ENCODE measurements at regions of chr14 and their contacts with region 1.

Region 1: DNA sequence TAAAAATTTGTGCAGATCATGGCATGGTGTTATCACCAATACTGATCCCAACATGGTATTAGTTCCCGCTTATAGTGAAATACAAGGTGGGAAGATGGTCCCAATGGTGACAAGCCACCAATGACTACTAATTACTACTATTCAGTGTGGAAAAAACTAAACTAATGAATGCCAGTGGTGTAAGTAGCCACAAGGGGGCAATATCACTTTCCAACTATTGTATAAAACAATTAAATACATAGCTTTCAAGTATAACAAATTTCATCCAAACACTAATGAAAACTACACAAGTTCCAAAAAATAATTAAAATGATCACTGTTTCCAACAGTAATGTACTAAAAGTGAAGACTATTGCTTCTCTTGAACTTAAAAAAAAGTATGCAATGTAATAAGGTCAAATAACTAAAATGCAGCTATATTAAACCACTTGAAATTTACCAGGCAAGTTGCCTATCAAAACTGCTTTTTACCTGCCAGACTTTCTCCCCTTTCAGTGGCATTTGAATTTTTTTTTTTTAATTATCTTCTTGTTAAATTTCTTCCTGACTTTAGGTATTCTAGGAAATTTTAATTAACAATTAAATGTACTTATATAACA is 58.0 kb downstream of the PAPLN start:
- DNase-seq: no peak
- H3K4me3 ChIP-seq: no peak overlapping the region
- H3K27ac ChIP-seq: no peak overlapping the region
- H3K27me3 ChIP-seq: no peaks in the 10 kb centered on the region
- CTCF ChIP-seq: peak; percentile 70

Region 2: GRCh38 chr14:72962829-72963312 is 332.4 kb before region 1 on chr14:
- CTCF ChIA-PET with region 1: no interaction called
- POLR2A ChIA-PET with region 1: no interaction called
- DNase-seq: peak; percentile 75
- H3K4me3 ChIP-seq: no peak overlapping the region
- H3K27ac ChIP-seq: no peak overlapping the region
- H3K27me3 ChIP-seq: no peaks in the 10 kb centered on the region
- CTCF ChIP-seq: no peak

Region 3: DNA sequence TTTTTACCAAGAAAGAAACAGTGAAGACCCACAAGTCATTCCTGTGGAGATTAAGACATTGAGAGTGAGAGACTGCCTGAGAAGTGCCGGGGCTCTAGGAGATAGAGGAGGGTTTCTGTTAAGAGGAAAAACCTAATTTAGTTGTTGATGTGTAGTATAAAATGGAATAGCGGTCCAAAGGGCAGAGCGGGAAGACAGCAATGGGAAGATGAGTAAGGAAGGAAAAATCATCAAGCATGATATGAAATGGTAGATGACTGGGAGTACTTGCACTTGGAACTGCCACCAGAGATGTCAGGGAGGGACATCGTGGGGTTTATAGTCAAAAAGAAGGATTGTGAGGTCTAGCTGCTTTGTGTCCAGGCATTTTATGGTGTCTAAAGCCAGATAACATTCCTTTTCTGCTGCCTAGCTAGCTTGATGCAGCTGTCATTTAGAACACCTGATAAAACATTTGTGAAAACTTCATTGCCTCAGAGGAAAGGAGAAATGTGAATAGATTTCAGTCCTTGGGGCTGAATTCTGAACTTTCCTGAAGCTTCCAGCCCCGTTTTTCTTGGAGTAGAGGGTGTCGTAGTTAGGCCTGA is 179.1 kb before region 1 on chr14:
- CTCF ChIA-PET with region 1: no interaction called
- POLR2A ChIA-PET with region 1: no interaction called
- DNase-seq: no peak
- H3K4me3 ChIP-seq: no peak overlapping the region
- H3K27ac ChIP-seq: no peak overlapping the region
- H3K27me3 ChIP-seq: no peaks in the 10 kb centered on the region
- CTCF ChIP-seq: no peak

Region 4: GRCh38 chr14:73245401-73246325 is 49.6 kb before region 1 on chr14:
- CTCF ChIA-PET with region 1: no interaction called
- POLR2A ChIA-PET with region 1: no interaction called
- DNase-seq: no peak
- H3K4me3 ChIP-seq: peak overlapping the region; percentile 61
- H3K27ac ChIP-seq: no peak overlapping the region
- H3K27me3 ChIP-seq: peaks cover 8% of the 10 kb centered on the region
- CTCF ChIP-seq: no peak

Region 5: GRCh38 chr14:73272393-73272792 is 22.9 kb before region 1 on chr14:
- CTCF ChIA-PET with region 1: interaction called, 11 read pairs
- POLR2A ChIA-PET with region 1: no interaction called
- DNase-seq: no peak
- H3K4me3 ChIP-seq: no peak overlapping the region
- H3K27ac ChIP-seq: no peak overlapping the region
- H3K27me3 ChIP-seq: no peaks in the 10 kb centered on the region
- CTCF ChIP-seq: no peak

Region 6: DNA sequence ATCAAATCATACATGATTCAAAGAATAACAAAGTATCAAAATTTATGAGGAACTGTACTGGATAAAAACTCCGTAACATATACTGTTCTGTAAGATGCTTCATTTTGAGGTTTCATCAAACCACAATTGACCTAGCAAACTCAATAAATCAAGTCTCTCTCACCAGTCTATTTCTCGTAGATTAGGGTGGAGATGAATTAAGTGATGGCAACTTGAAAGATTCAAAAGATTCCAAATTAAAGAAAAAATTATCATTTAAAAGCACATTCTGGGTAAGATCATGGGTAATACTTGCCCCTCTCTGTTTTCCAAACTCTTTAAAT is 16.4 kb after region 1 on chr14:
- CTCF ChIA-PET with region 1: interaction called, 37 read pairs
- POLR2A ChIA-PET with region 1: interaction called, 6 read pairs
- DNase-seq: no peak
- H3K4me3 ChIP-seq: no peak overlapping the region
- H3K27ac ChIP-seq: no peak overlapping the region
- H3K27me3 ChIP-seq: no peaks in the 10 kb centered on the region
- CTCF ChIP-seq: no peak

Region 7: GRCh38 chr14:73452341-73453186 is 157.3 kb after region 1 on chr14:
- CTCF ChIA-PET with region 1: interaction called, 11 read pairs
- POLR2A ChIA-PET with region 1: no interaction called
- DNase-seq: peak; percentile 85
- H3K4me3 ChIP-seq: no peak overlapping the region
- H3K27ac ChIP-seq: no peak overlapping the region
- H3K27me3 ChIP-seq: no peaks in the 10 kb centered on the region
- CTCF ChIP-seq: no peak

Region 8: DNA sequence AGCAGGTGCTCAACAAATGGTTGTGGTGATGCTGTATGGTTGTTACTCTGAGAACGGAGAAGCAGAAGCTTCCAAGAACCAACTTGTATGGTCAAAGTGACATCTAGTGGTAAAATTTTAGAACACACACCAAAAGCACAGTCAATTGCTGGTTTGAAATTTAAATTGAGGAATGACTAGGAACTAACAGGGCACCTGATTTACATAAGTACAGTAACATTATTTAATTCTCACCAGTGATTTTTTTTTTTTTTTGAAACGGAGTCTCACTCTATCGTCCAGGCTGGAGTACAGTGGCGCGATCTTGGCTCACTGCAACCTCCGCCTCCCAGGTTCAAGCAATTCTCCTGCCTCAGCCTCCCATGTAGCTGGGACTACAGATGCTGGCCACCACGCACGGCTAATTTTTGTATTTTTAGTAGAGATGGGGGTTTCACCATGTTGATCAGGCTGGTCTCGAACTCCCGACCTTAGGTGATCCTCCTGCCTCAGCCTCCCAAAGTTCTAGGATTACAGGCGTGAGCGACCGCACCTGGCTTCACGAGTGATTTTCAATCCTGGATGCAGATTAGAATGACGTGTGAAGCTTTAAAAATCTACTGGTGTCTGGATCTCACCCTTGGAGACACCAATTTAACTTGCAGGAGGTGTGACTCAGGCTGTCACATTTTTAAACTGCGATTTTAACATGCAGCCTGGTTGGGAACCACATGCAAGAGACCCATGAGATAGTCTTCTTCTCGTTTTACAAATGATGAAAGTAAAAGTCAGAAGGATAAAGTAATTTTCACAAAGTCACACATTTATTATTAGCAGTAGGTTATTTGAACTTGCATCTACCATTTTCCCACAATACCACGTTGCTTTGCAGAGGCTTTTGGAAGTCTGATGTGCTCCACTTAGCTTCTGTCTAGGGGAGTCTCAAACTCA is 177.2 kb after region 1 on chr14:
- CTCF ChIA-PET with region 1: interaction called, 173 read pairs
- POLR2A ChIA-PET with region 1: interaction called, 4 read pairs
- DNase-seq: peak; percentile 50
- H3K4me3 ChIP-seq: no peak overlapping the region
- H3K27ac ChIP-seq: no peak overlapping the region
- H3K27me3 ChIP-seq: no peaks in the 10 kb centered on the region
- CTCF ChIP-seq: peak; percentile 68